ENCODE measurements at regions of chr22 and their contacts with region 1.

Region 1: GRCh38 chr22:30289134-30289979 is at the start of gene CASTOR1:
- DNase-seq: peak; percentile 78 to 97 (median 84)
- ATAC-seq: peak; percentile 89
- H3K4me3 ChIP-seq: peak within 1 kb of the TSS; percentile 80
- H3K4me3 Mint-ChIP-seq: peak within 1 kb of the TSS; percentile 87 to 93 (median 90)
- H3K27ac ChIP-seq: peak within 1 kb of the TSS; percentile 75
- H3K27ac Mint-ChIP-seq: peak within 1 kb of the TSS; percentile 85 to 96 (median 92)
- H3K4me1 ChIP-seq: peaks cover 25 to 27% of the 10 kb centered on the region in 2 donors
- H3K4me1 Mint-ChIP-seq: peaks cover 12 to 55% (median 39%) of the 10 kb centered on the region in 7 donors
- H3K27me3 ChIP-seq: no peaks in the 10 kb centered on the region
- H3K27me3 Mint-ChIP-seq: no peaks in the 10 kb centered on the region
- total RNA-seq, gene CASTOR1: 12.4 to 21.3 (median 17.9) TPM

Region 2: DNA sequence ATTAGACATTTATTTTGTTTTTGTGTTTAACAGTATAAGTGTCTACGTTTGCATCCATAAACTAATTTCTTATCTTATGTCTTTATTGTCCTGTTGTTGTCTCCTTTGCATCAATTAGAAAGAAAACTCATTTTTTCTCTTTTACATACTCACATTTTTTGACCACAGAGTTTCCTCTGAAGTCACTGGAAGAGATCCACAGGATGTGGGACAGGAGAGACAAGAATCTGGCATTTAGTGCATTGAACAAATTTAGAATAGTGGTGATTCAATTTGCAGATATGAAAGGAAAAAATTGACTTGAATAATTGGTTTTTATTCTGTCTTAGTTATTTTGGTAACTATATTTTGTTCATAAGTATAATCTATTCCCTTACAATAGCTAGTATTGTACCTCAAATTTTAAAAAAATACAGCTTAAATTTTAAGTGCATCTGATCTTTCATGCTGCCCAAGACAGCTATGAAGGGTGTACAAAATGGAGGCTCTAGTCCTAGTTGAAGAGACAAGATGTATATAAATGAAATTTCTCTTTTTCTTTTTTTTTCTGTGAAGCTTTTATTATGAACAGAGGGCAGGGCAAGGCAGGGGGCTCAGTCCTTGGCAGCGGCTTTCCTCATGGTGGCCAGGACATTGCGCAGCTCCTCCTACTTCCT is 184.7 kb before region 1 on chr22:
- CTCF ChIA-PET with region 1: interaction called, 50 read pairs
- POLR2A ChIA-PET with region 1: interaction called, 5 read pairs
- intact Hi-C with region 1: loop called (anchors 1 kb)
- DNase-seq: peak in 6 of 9 donors; percentile 28 to 62 (median 45)
- ATAC-seq: no peak
- H3K4me3 ChIP-seq: no peak overlapping the region
- H3K4me3 Mint-ChIP-seq: peak overlapping the region in 8 of 10 donors; percentile 22 to 63 (median 42)
- H3K27ac ChIP-seq: no peak overlapping the region
- H3K27ac Mint-ChIP-seq: peak overlapping the region in 3 of 9 donors; percentile 25 to 66 (median 33)
- H3K4me1 ChIP-seq: peaks cover 0 to 16% of the 10 kb centered on the region in 2 donors
- H3K4me1 Mint-ChIP-seq: peaks cover 22 to 62% (median 46%) of the 10 kb centered on the region in 7 donors
- H3K27me3 ChIP-seq: no peaks in the 10 kb centered on the region
- H3K27me3 Mint-ChIP-seq: no peaks in the 10 kb centered on the region

Region 3: DNA sequence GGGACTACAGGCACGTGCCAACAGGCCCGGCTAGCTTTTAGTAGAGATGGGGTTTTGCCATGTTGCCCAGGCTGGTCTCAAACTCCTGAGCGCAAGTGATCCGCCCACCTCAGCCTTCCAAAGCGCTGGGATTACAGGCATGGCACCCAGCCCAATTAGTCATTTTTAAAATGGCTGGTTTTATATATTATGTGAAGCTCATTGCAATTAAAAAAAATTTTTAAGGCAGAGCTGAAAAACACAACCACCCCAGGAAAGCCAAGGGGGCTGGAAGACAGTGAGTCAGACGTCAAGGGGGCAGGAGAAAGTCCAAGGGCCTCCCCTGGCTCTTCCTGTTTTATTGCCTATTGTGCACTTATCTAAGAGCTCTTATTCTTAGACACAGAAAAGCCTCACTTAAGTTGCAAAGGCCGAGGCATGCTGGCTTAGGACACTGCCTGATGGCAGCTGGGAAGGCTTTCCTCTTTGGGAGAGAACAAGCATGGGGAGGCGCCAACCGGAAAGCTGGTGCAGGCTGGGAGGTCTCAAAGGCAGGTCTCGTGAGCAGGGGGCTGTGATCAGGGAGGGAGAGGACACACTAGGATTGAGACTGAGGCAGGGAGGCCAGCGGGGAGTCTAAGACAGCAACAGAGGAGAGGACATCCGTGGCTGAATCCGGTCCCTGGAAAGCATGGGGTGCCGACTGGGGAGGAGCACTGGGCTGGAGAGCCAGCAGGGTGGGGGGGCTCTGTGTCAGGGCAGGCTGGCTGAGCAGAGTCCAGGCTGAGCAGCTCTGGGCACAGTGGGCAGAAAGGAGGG is 11.6 kb before region 1 on chr22:
- CTCF ChIA-PET with region 1: interaction called, 20 read pairs
- POLR2A ChIA-PET with region 1: interaction called, 6 read pairs
- intact Hi-C with region 1: no loop called
- DNase-seq: no peak
- ATAC-seq: no peak
- H3K4me3 ChIP-seq: no peak overlapping the region
- H3K4me3 Mint-ChIP-seq: peak overlapping the region in 1 of 10 donors; percentile 53
- H3K27ac ChIP-seq: no peak overlapping the region
- H3K27ac Mint-ChIP-seq: peak overlapping the region in 2 of 9 donors; percentile 43 to 56
- H3K4me1 ChIP-seq: peaks cover 5 to 20% of the 10 kb centered on the region in 2 donors
- H3K4me1 Mint-ChIP-seq: peaks cover 36 to 71% (median 42%) of the 10 kb centered on the region in 7 donors
- H3K27me3 ChIP-seq: no peaks in the 10 kb centered on the region
- H3K27me3 Mint-ChIP-seq: no peaks in the 10 kb centered on the region

Region 4: DNA sequence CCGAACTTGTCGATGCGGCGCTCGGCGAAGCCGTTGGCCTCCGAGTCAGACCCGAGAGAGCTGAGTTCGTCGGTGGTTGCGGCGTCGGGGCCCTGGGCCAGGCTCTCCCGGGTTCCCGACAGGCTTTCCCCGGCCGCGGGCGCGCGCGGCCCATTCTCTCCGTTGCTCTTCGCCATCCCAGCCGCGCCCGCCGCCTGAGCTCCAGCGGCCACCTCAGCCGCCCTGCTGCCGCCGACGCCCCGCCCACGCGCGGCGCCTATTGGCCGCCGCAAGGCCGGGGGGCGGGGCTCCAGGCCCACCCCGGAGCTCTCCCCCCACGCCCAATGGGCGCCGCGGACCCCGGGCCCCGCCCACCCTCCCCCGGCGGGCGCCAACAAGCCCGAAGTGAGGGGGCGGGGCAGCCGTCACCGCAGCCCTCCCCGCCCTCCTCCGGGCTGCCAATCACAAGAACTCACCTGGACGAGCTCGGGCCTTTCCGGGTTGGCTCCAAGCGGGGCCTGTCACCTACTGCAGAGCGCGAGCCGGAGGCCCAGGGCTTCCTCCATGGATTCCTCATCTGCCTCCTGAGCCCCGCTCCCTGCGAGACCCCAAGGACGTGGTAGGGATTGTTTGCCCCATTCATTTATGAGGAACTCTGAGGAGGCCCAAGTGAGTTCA is 37.5 kb after region 1 on chr22 and contains the start of gene TBC1D10A:
- CTCF ChIA-PET with region 1: interaction called, 78 read pairs
- POLR2A ChIA-PET with region 1: interaction called, 1,265 read pairs
- intact Hi-C with region 1: loop called (anchors 1 kb)
- DNase-seq: peak; percentile 87 to 93 (median 92)
- ATAC-seq: peak; percentile 97
- H3K4me3 ChIP-seq: peak within 1 kb of the TSS; percentile 83
- H3K4me3 Mint-ChIP-seq: peak within 1 kb of the TSS; percentile 87 to 96 (median 93)
- H3K27ac ChIP-seq: peak within 1 kb of the TSS; percentile 78
- H3K27ac Mint-ChIP-seq: peak within 1 kb of the TSS; percentile 82 to 94 (median 90)
- H3K4me1 ChIP-seq: peaks cover 43 to 49% of the 10 kb centered on the region in 2 donors
- H3K4me1 Mint-ChIP-seq: peaks cover 37 to 55% (median 48%) of the 10 kb centered on the region in 7 donors
- H3K27me3 ChIP-seq: no peaks in the 10 kb centered on the region
- H3K27me3 Mint-ChIP-seq: no peaks in the 10 kb centered on the region
- total RNA-seq, gene TBC1D10A: 47.2 to 73.8 (median 70.9) TPM

Region 5: GRCh38 chr22:30368431-30368830 is 79.1 kb after region 1 on chr22:
- CTCF ChIA-PET with region 1: interaction called, 10 read pairs
- POLR2A ChIA-PET with region 1: interaction called, 3 read pairs
- intact Hi-C with region 1: no loop called
- DNase-seq: no peak
- ATAC-seq: no peak
- H3K4me3 ChIP-seq: no peak overlapping the region
- H3K4me3 Mint-ChIP-seq: no peak overlapping the region
- H3K27ac ChIP-seq: no peak overlapping the region
- H3K27ac Mint-ChIP-seq: peak overlapping the region in 1 of 9 donors; percentile 21
- H3K4me1 ChIP-seq: no peaks in the 10 kb centered on the region
- H3K4me1 Mint-ChIP-seq: no peaks in the 10 kb centered on the region
- H3K27me3 ChIP-seq: no peaks in the 10 kb centered on the region
- H3K27me3 Mint-ChIP-seq: no peaks in the 10 kb centered on the region

Region 6: DNA sequence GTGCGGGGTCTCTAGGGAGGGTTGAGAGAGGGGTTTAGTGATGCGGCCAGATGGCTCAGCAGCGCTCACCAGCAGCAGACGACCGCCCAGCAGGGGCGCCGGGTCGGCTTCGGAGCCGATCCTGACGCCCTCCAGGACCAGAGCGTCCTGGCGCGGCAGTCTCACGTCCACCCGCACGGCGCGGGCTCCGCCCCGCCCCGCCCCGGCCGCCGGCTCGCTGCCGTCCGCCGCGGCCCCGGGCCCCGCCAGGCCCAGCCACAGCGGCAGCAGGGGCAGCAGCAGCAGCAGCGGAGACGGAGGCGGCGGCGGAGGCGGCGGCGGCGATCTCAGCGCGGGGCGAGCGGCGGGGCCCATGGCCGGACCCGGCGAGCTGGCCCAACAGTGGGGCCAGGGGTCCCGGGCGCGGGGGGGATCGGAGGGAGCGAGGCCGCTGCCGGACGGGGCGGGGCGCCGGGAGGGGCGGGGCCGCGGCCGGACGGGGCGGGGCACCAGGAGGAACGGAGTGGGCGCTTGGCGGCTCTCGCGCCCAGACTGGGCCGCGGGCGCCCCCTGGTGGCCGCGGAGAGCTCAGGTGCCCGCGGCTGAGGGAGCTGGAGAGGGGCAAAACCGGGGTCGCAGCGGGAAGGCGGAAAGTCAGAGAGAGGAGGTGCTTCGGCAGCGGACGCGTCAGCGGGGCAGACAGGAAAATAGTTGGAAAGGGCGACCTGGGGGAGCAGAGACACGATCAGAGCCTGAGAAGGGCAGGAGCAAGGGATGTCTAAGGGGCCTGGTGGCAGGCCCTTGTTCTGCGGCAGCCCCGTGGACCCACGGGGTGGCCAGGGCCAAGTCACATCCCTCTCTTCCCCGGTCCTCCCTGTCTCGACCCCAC is 97.8 kb after region 1 on chr22 and contains the start of gene RNF215:
- CTCF ChIA-PET with region 1: interaction called, 157 read pairs
- POLR2A ChIA-PET with region 1: interaction called, 84 read pairs
- intact Hi-C with region 1: loop called (anchors 1 kb)
- DNase-seq: peak; percentile 55 to 92 (median 82)
- ATAC-seq: peak; percentile 97
- H3K4me3 ChIP-seq: no peak within 1 kb of the TSS
- H3K4me3 Mint-ChIP-seq: peak within 1 kb of the TSS; percentile 54 to 83 (median 78)
- H3K27ac ChIP-seq: peak within 1 kb of the TSS; percentile 26
- H3K27ac Mint-ChIP-seq: peak within 1 kb of the TSS in 6 of 9 donors; percentile 41 to 86 (median 70)
- H3K4me1 ChIP-seq: peaks cover 3 to 10% of the 10 kb centered on the region in 2 donors
- H3K4me1 Mint-ChIP-seq: peaks cover 16 to 22% (median 20%) of the 10 kb centered on the region in 7 donors
- H3K27me3 ChIP-seq: no peaks in the 10 kb centered on the region
- H3K27me3 Mint-ChIP-seq: peaks cover 0 to 4% (median 0%) of the 10 kb centered on the region in 5 donors
- total RNA-seq, gene RNF215: 4.3 to 10.8 (median 5.3) TPM

Region 7: DNA sequence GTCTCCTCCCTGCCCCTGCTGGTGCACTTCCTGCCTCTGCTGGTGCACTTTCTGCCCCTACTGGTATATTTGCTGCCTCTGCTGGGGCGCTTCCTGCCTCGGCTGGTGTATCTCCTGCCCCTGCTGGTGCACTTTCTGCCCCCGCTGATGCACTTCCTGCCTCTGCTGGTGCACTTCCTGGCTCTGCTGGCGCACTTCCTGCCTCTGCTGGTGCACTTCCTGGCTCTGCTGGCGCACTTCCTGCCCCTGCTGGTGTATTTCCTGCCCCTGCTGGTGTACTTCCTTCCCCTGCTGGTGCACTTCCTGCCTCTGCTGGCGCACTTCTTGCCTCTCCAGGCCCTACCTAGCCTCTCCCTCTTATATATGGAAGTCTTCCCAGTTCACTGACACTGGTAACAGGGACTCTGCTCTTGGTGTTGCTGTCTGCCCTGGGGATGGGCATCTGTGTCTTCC is 146.3 kb after region 1 on chr22:
- CTCF ChIA-PET with region 1: interaction called, 6 read pairs
- POLR2A ChIA-PET with region 1: interaction called, 4 read pairs
- intact Hi-C with region 1: loop called in 1 of 2 experiments (anchors 1 kb)
- DNase-seq: peak; percentile 45 to 97 (median 92)
- ATAC-seq: peak; percentile 94
- H3K4me3 ChIP-seq: peak overlapping the region; percentile 53
- H3K4me3 Mint-ChIP-seq: peak overlapping the region; percentile 57 to 90 (median 83)
- H3K27ac ChIP-seq: peak overlapping the region; percentile 99
- H3K27ac Mint-ChIP-seq: peak overlapping the region; percentile 88 to 100 (median 98)
- H3K4me1 ChIP-seq: peaks cover 16 to 21% of the 10 kb centered on the region in 2 donors
- H3K4me1 Mint-ChIP-seq: peaks cover 10 to 26% (median 23%) of the 10 kb centered on the region in 7 donors
- H3K27me3 ChIP-seq: peaks cover 3 to 6% of the 10 kb centered on the region in 2 donors
- H3K27me3 Mint-ChIP-seq: peaks cover 12 to 24% (median 18%) of the 10 kb centered on the region in 5 donors